Activated CD8-positive, alpha-beta T cell treated with anti-CD3 and anti-CD28 coated beads, Interleukin-2, amount 10 ng/mL, durations not matched to agents 7 days and 5 days (primary cell): ENCODE measurements at regions of chr12 and their contacts with region 1.

Region 1: GRCh38 chr12:69157023-69157655 is 82.2 kb upstream of the CPSF6 start:
- DNase-seq: peak; percentile 95
- ATAC-seq: peak; percentile 93
- H3K4me3 Mint-ChIP-seq: peak overlapping the region; percentile 34
- H3K27ac Mint-ChIP-seq: peak overlapping the region; percentile 53
- H3K4me1 Mint-ChIP-seq: peaks cover 48% of the 10 kb centered on the region
- H3K27me3 Mint-ChIP-seq: peaks cover 3% of the 10 kb centered on the region

Region 2: GRCh38 chr12:68958322-68958721 is 198.8 kb before region 1 on chr12:
- CTCF ChIA-PET with region 1: no interaction called
- POLR2A ChIA-PET with region 1: no interaction called
- DNase-seq: peak; percentile 58
- ATAC-seq: peak; percentile 77
- H3K4me3 Mint-ChIP-seq: no peak overlapping the region
- H3K27ac Mint-ChIP-seq: peak overlapping the region; percentile 86
- H3K4me1 Mint-ChIP-seq: peaks cover 22% of the 10 kb centered on the region
- H3K27me3 Mint-ChIP-seq: no peaks in the 10 kb centered on the region

Region 3: GRCh38 chr12:69239352-69239921 is 82.3 kb after region 1 on chr12 and contains the start of gene CPSF6:
- CTCF ChIA-PET with region 1: interaction called, 24 read pairs
- POLR2A ChIA-PET with region 1: interaction called, 3 read pairs
- DNase-seq: peak; percentile 97
- ATAC-seq: peak; percentile 92
- H3K4me3 Mint-ChIP-seq: peak within 1 kb of the TSS; percentile 93
- H3K27ac Mint-ChIP-seq: peak within 1 kb of the TSS; percentile 97
- H3K4me1 Mint-ChIP-seq: peaks cover 45% of the 10 kb centered on the region
- H3K27me3 Mint-ChIP-seq: no peaks in the 10 kb centered on the region
- total RNA-seq, gene CPSF6: 95.6 to 97.8 TPM

Region 4: DNA sequence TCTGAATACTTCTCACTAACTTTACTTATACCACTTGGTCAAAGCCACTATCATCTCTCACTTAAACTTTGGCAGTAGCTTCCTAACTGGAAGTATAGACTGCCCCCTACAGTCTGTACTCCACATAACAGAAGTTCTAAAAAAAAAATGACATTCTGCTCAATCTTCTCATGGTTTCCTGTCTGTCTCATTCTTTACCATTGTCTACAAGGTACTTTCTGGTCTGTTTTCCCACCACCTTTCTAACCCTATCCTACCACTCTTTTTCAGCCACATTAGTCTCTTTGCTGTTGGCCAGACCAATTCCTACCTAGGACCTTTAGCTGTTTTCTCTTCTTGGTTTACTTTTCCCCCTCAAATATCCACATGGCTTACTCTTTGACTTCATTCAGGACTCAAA is 96.9 kb after region 1 on chr12:
- CTCF ChIA-PET with region 1: interaction called, 118 read pairs
- POLR2A ChIA-PET with region 1: interaction called, 8 read pairs
- DNase-seq: no peak
- ATAC-seq: peak; percentile 69
- H3K4me3 Mint-ChIP-seq: no peak overlapping the region
- H3K27ac Mint-ChIP-seq: peak overlapping the region; percentile 77
- H3K4me1 Mint-ChIP-seq: peaks cover 24% of the 10 kb centered on the region
- H3K27me3 Mint-ChIP-seq: no peaks in the 10 kb centered on the region

Region 5: DNA sequence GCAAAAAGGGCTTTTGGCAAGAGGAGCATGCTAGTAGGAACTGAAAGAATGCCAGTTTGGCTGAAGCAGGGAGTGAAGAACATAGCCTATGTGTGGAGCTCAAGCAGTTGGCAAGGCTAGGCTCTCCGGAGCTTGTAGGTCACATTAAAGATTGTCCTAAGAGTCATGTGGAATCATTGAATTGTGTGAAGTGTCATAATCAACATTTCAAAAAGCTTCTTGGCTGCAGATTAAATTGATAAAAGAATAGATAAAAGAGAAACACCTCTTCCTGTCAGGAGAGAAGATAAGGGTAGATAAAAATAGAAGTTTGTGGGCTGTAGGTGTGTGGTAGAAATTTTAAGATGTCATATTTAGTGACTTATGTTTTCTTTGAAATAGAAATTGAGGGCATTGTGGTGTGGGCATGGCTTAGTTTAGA is 118.3 kb after region 1 on chr12:
- CTCF ChIA-PET with region 1: interaction called, 13 read pairs
- POLR2A ChIA-PET with region 1: no interaction called
- DNase-seq: no peak
- ATAC-seq: peak; percentile 84
- H3K4me3 Mint-ChIP-seq: peak overlapping the region; percentile 36
- H3K27ac Mint-ChIP-seq: peak overlapping the region; percentile 26
- H3K4me1 Mint-ChIP-seq: peaks cover 36% of the 10 kb centered on the region
- H3K27me3 Mint-ChIP-seq: no peaks in the 10 kb centered on the region